A673 (cell line): ENCODE measurements at regions of chr14 and their contacts with region 1.

Region 1: GRCh38 chr14:29709490-29709889 is 218.2 kb downstream of the PRKD1 start:
- DNase-seq: peak; percentile 30
- H3K4me3 ChIP-seq: no peak overlapping the region
- H3K27ac ChIP-seq: peak overlapping the region; percentile 64
- H3K4me1 ChIP-seq: peaks cover 19% of the 10 kb centered on the region
- H3K27me3 ChIP-seq: no peaks in the 10 kb centered on the region
- CTCF ChIP-seq: no peak

Region 2: GRCh38 chr14:28057359-28058296 is 1651.9 kb before region 1 on chr14:
- CTCF ChIA-PET with region 1: no interaction called
- POLR2A ChIA-PET with region 1: no interaction called
- intact Hi-C with region 1: no loop called
- DNase-seq: no peak
- H3K4me3 ChIP-seq: no peak overlapping the region
- H3K27ac ChIP-seq: no peak overlapping the region
- H3K4me1 ChIP-seq: no peaks in the 10 kb centered on the region
- H3K27me3 ChIP-seq: no peaks in the 10 kb centered on the region
- CTCF ChIP-seq: no peak

Region 3: GRCh38 chr14:30005114-30005808 is 295.8 kb after region 1 on chr14:
- CTCF ChIA-PET with region 1: no interaction called
- POLR2A ChIA-PET with region 1: no interaction called
- intact Hi-C with region 1: loop called (anchors 2 kb)
- DNase-seq: peak; percentile 77
- H3K4me3 ChIP-seq: no peak overlapping the region
- H3K27ac ChIP-seq: no peak overlapping the region
- H3K4me1 ChIP-seq: peaks cover 21% of the 10 kb centered on the region
- H3K27me3 ChIP-seq: no peaks in the 10 kb centered on the region
- CTCF ChIP-seq: peak; percentile 81